K562 (cell line): ENCODE measurements at regions of chr14 and their contacts with region 1.

Region 1: GRCh38 chr14:70972107-70972976 is 65.1 kb downstream of the PCNX1 start:
- DNase-seq: peak; percentile 20 to 78 (median 30)
- ATAC-seq: peak; percentile 82
- H3K4me3 ChIP-seq: no peak overlapping the region
- H3K27ac ChIP-seq: no peak overlapping the region
- H3K4me1 ChIP-seq: no peaks in the 10 kb centered on the region
- H3K27me3 ChIP-seq: no peaks in the 10 kb centered on the region
- CTCF ChIP-seq: peak; percentile 64 to 79 (median 72)
- EP300 ChIP-seq: no peak
- POLR2A ChIP-seq: no peak
- RAD21 ChIP-seq: peak; percentile 49 to 76

Region 2: GRCh38 chr14:70809543-70810244 is 162.6 kb before region 1 on chr14:
- CTCF ChIA-PET with region 1: no interaction called
- POLR2A ChIA-PET with region 1: no interaction called
- in situ Hi-C with region 1: loop called (anchors 10 kb)
- intact Hi-C with region 1: no loop called
- DNase-seq: peak; percentile 82 to 93 (median 90)
- ATAC-seq: peak; percentile 97
- H3K4me3 ChIP-seq: peak overlapping the region; percentile 45
- H3K27ac ChIP-seq: no peak overlapping the region
- H3K4me1 ChIP-seq: peaks cover 0 to 11% of the 10 kb centered on the region in 2 experiments; a peak in 2 of 5 replicates
- H3K27me3 ChIP-seq: no peaks in the 10 kb centered on the region
- CTCF ChIP-seq: no peak
- EP300 ChIP-seq: no peak
- POLR2A ChIP-seq: no peak
- RAD21 ChIP-seq: no peak

Region 3: GRCh38 chr14:70816525-70816924 is 155.8 kb before region 1 on chr14:
- CTCF ChIA-PET with region 1: interaction called, 15 read pairs
- POLR2A ChIA-PET with region 1: no interaction called
- in situ Hi-C with region 1: loop called (anchors 10 kb)
- intact Hi-C with region 1: loop called (anchors 5 kb)
- DNase-seq: no peak
- ATAC-seq: no peak
- H3K4me3 ChIP-seq: no peak overlapping the region
- H3K27ac ChIP-seq: no peak overlapping the region
- H3K4me1 ChIP-seq: peaks cover 0 to under 1% of the 10 kb centered on the region in 2 experiments; a peak in 1 of 5 replicates
- H3K27me3 ChIP-seq: peaks cover 0 to 2% of the 10 kb centered on the region in 2 experiments; a peak in 2 of 5 replicates
- CTCF ChIP-seq: no peak
- EP300 ChIP-seq: no peak
- POLR2A ChIP-seq: no peak
- RAD21 ChIP-seq: no peak